Activated B cell treated with CpG ODN at 0.5 μM for 24 hours (primary cell): ENCODE measurements at regions of chr3 and their contacts with region 1.

Region 1: GRCh38 chr3:42101048-42101447 is 9.9 kb downstream of the TRAK1 start:
- DNase-seq: no peak
- ATAC-seq: no peak
- H3K4me3 Mint-ChIP-seq: no peak overlapping the region
- H3K27ac Mint-ChIP-seq: peak overlapping the region; percentile 24
- H3K4me1 Mint-ChIP-seq: peaks cover 37% of the 10 kb centered on the region
- H3K27me3 Mint-ChIP-seq: no peaks in the 10 kb centered on the region
- CTCF ChIP-seq: no peak

Region 2: GRCh38 chr3:41893977-41894376 is 207.1 kb before region 1 on chr3:
- CTCF ChIA-PET with region 1: interaction called, 59 read pairs
- POLR2A ChIA-PET with region 1: no interaction called
- intact Hi-C with region 1: loop called (anchors 1 kb)
- DNase-seq: no peak
- ATAC-seq: no peak
- H3K4me3 Mint-ChIP-seq: no peak overlapping the region
- H3K27ac Mint-ChIP-seq: no peak overlapping the region
- H3K4me1 Mint-ChIP-seq: no peaks in the 10 kb centered on the region
- H3K27me3 Mint-ChIP-seq: no peaks in the 10 kb centered on the region
- CTCF ChIP-seq: no peak

Region 3: GRCh38 chr3:41997702-41998550 is 103.1 kb before region 1 on chr3:
- CTCF ChIA-PET with region 1: interaction called, 17 read pairs
- POLR2A ChIA-PET with region 1: no interaction called
- intact Hi-C with region 1: no loop called
- DNase-seq: no peak
- ATAC-seq: peak; percentile 40
- H3K4me3 Mint-ChIP-seq: no peak overlapping the region
- H3K27ac Mint-ChIP-seq: no peak overlapping the region
- H3K4me1 Mint-ChIP-seq: no peaks in the 10 kb centered on the region
- H3K27me3 Mint-ChIP-seq: no peaks in the 10 kb centered on the region
- CTCF ChIP-seq: no peak

Region 4: DNA sequence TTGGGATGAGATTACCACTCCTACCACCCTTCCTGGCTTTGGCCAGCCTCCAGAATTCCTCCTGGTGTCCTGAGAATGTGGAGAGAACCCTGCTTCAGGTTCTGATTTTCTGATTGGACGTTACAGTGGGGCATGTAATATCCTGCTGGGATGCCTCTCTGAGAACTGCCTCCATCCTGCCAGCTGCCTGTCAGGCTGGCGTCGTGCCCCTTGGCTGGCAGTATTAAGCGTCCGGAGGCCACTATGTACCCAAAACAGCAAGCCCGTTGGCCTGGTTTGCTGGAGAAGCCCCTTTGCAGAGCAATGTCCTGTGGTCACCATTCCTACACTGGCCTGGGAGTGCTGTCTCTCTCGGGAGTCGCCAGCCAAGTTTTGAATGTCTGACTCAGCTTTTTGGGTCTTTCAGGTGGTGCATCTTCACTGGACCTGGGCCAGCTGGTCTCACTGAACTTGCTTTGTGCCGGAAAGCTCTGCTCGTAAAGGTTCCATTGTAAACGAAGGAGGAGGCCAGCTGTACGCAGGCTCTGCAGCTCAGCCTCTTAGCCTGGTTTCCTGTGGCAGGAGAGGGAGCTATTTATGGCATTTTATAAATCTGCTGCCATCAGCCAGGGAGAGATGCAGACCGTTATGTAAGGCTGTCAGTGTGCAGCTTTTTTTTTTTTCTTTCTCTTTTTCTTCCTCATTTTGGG is 29.0 kb before region 1 on chr3:
- CTCF ChIA-PET with region 1: interaction called, 17 read pairs
- POLR2A ChIA-PET with region 1: interaction called, 3 read pairs
- intact Hi-C with region 1: no loop called
- DNase-seq: no peak
- ATAC-seq: no peak
- H3K4me3 Mint-ChIP-seq: peak overlapping the region; percentile 44
- H3K27ac Mint-ChIP-seq: peak overlapping the region; percentile 80
- H3K4me1 Mint-ChIP-seq: peaks cover 86% of the 10 kb centered on the region
- H3K27me3 Mint-ChIP-seq: no peaks in the 10 kb centered on the region
- CTCF ChIP-seq: no peak

Region 5: GRCh38 chr3:42190701-42191462 is 89.8 kb after region 1 on chr3:
- CTCF ChIA-PET with region 1: interaction called, 35 read pairs
- POLR2A ChIA-PET with region 1: no interaction called
- intact Hi-C with region 1: loop called (anchors 1 kb)
- DNase-seq: peak; percentile 40
- ATAC-seq: peak; percentile 52
- H3K4me3 Mint-ChIP-seq: peak overlapping the region; percentile 28
- H3K27ac Mint-ChIP-seq: peak overlapping the region; percentile 63
- H3K4me1 Mint-ChIP-seq: peaks cover 44% of the 10 kb centered on the region
- H3K27me3 Mint-ChIP-seq: no peaks in the 10 kb centered on the region
- CTCF ChIP-seq: peak; percentile 51

Region 6: DNA sequence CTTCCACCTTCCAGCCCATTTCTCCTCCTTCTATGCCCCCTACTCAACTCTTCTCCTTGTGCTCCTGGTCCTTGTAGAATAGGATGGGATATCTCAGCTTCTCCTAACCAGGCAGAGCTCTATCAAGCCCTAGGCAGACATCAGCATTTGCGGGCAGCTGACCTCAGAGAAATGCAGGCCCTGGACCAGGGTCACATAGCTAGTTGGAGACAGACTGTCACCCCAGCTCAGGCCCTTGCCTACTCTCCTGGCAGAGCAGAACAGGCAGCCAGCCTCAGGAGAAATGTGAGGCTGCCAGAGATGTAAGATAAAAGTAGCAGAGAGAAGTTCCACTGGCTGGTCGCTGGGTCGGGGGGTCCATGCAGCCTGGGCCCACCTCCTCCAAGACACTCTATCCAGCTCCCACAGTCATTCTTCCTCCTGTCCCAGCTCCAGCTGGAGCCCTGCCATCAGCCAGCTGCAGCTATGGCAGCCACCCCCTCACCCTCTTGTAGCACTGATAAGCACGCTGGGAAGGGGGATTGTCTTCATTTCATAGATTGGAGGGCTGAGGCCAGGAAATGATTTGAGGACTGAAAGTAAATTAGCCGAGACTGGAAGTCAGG is 770.6 kb after region 1 on chr3:
- CTCF ChIA-PET with region 1: no interaction called
- POLR2A ChIA-PET with region 1: no interaction called
- intact Hi-C with region 1: no loop called
- DNase-seq: no peak
- ATAC-seq: no peak
- H3K4me3 Mint-ChIP-seq: no peak overlapping the region
- H3K27ac Mint-ChIP-seq: no peak overlapping the region
- H3K4me1 Mint-ChIP-seq: no peaks in the 10 kb centered on the region
- H3K27me3 Mint-ChIP-seq: no peaks in the 10 kb centered on the region
- CTCF ChIP-seq: no peak